ENCODE measurements at regions of chrX and their contacts with region 1.

Region 1: DNA sequence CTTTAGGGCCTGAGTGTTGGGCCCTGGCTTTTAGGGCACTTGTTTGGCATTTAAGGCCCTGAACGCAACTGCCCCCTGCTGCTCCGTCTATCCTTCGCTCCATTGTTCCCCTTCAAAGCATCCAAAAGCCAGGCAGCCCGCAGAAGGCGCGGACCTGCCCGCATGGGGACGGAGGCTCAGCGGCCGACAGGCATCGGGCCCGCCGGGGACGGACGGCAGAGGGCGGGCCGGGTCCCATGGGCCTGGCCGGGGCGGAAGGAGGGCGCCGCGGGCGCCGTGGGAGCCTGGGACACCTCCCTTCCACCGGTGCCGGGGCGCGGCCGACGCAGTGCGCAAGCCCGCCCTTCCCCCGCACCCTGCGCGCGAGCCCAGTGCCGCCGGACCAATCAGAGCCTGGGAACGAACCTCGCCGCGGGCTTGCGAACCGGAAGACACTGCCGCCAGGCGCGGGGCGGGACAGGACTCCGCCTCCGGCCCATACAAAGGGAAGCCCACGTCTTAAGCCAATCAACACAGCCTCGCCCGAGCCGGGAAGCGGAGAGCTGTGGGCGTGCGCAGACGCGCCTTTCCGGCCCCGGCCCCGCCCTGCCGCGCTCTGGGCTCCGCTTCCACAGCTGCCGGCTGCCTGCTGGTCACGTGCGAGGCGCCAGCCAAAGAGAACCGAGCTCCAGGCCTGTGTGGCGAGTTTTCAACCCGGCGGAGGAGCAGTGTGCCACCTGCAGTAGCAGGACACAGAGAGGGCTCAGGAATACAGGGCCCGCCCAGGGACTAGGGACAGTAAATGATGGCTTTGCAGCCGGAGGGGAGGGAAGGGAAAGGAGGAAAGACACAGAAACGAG is 2.1 kb upstream of the ARHGAP4 start:
- DNase-seq: peak; percentile 91 to 98
- H3K4me3 ChIP-seq: peak overlapping the region; percentile 66 to 76
- H3K27ac ChIP-seq: peak overlapping the region; percentile 92 to 97
- H3K4me1 ChIP-seq: peaks cover 6 to 9% of the 10 kb centered on the region in 2 donors
- H3K27me3 ChIP-seq: no peaks in the 10 kb centered on the region
- CTCF ChIP-seq: peak in 1 of 3 experiments; percentile 25

Region 2: GRCh38 chrX:153724252-153725040 is 203.7 kb before region 1 on chrX and contains the starts of genes ABCD1 and BCAP31:
- intact Hi-C with region 1: loop called (anchors 1 kb)
- DNase-seq: peak; percentile 51 to 92
- H3K4me3 ChIP-seq: peak within 1 kb of the TSS; percentile 62 to 69
- H3K27ac ChIP-seq: peak within 1 kb of the TSS; percentile 88 to 89
- H3K4me1 ChIP-seq: peaks cover 8 to 26% of the 10 kb centered on the region in 2 donors
- H3K27me3 ChIP-seq: no peaks in the 10 kb centered on the region
- CTCF ChIP-seq: no peak
- total RNA-seq, gene ABCD1: 14.7 TPM
- total RNA-seq, gene BCAP31: 63.0 TPM

Region 3: DNA sequence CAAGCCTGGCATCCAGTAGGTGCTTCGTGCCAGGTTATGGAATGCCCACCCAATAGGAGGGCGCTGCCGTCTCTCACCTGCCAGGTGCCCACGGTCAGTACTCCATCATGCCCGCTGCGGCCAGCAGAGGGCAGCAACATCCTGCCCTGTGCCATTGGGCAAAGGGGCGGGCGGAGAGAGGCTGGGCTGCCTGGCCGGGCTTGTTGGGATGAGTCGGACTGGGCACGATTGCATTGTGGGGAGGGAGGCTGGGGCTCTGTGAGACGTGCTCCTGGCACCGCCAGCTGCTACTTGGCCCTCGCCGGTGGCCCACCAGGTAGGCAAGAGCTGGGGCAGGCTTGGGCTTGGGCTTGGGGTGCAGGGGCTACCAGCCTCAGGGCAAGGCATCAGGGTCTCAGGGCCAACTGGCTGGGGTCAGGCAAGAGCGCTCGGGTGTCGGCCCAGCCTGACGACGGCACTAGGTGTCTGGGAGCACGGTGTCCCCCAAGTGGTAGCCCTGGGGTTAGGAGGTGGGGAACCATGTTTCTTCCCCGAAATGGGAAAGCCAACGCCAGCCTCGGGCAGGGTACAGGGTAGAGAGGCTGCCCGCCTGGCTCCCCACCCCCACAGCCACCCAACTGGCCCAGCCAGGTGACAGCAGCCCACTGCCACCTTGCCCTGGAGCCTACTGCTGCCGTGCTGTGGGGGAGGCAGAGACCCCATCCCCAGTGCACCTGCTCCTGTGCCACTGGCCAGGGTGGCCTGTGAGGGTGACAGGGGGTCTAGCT is 164.0 kb before region 1 on chrX and contains the start of gene PLXNB3:
- intact Hi-C with region 1: no loop called
- DNase-seq: peak; percentile 32 to 90
- H3K4me3 ChIP-seq: peak within 1 kb of the TSS; percentile 31 to 56
- H3K27ac ChIP-seq: peak within 1 kb of the TSS; percentile 58 to 59
- H3K4me1 ChIP-seq: peaks cover 0 to 8% of the 10 kb centered on the region in 2 donors
- H3K27me3 ChIP-seq: no peaks in the 10 kb centered on the region
- CTCF ChIP-seq: peak; percentile 81 to 87 (median 82)
- total RNA-seq, gene PLXNB3: 99.1 TPM

Region 4: GRCh38 chrX:153794018-153794896 is 133.9 kb before region 1 on chrX and contains the starts of genes IDH3G and SSR4:
- intact Hi-C with region 1: loop called (anchors 1 kb)
- DNase-seq: peak; percentile 48 to 95
- H3K4me3 ChIP-seq: peak within 1 kb of the TSS; percentile 71 to 76
- H3K27ac ChIP-seq: peak within 1 kb of the TSS; percentile 93 to 96
- H3K4me1 ChIP-seq: peaks cover 0 to 6% of the 10 kb centered on the region in 2 donors
- H3K27me3 ChIP-seq: no peaks in the 10 kb centered on the region
- CTCF ChIP-seq: peak in 1 of 3 experiments; percentile 13
- total RNA-seq, gene IDH3G: 351 TPM
- total RNA-seq, gene SSR4: 331 TPM

Region 5: GRCh38 chrX:153947009-153947769 is 19.0 kb after region 1 on chrX:
- intact Hi-C with region 1: loop called (anchors 2 kb)
- DNase-seq: peak in 1 of 2 donors; percentile 83
- H3K4me3 ChIP-seq: no peak overlapping the region
- H3K27ac ChIP-seq: peak overlapping the region in 1 of 2 donors; percentile 12
- H3K4me1 ChIP-seq: peaks cover 0 to 2% of the 10 kb centered on the region in 2 donors
- H3K27me3 ChIP-seq: no peaks in the 10 kb centered on the region
- CTCF ChIP-seq: peak; percentile 68 to 77 (median 71)

Region 6: DNA sequence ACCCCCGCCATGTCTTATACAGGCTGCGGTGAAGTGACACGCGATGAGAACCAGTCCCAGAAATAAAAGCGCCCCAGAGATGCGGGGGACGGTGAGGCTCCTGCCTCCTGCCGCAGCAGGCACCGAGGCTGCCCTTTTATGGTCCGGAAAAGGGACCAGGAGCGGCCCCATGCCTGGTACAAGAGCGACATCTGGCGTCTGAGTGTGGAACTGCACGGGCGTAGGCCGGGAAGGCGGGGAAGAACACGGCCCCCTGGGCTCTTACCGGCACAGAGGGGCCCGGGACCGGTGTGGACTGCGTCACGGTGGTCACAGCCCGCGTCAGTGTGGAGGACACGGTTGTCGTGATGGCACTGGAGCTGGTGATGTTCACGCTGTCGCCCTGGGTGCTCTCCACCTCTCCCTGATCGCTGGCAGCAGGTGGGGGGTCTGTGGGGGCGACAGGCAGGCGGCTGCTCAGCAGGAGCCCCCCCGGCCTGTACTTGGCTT is 25.2 kb after region 1 on chrX:
- intact Hi-C with region 1: loop called (anchors 1 kb)
- DNase-seq: peak in 1 of 2 donors; percentile 89
- H3K4me3 ChIP-seq: peak overlapping the region in 1 of 2 donors; percentile 27
- H3K27ac ChIP-seq: peak overlapping the region; percentile 69 to 78
- H3K4me1 ChIP-seq: peaks cover 4 to 16% of the 10 kb centered on the region in 2 donors
- H3K27me3 ChIP-seq: no peaks in the 10 kb centered on the region
- CTCF ChIP-seq: peak; percentile 97 to 100 (median 99)

Region 7: GRCh38 chrX:153971450-153972367 is 43.6 kb after region 1 on chrX and contains the start of gene HCFC1:
- intact Hi-C with region 1: loop called (anchors 1 kb)
- DNase-seq: peak; percentile 73 to 97
- H3K4me3 ChIP-seq: peak within 1 kb of the TSS; percentile 84 to 91
- H3K27ac ChIP-seq: peak within 1 kb of the TSS; percentile 98 to 99
- H3K4me1 ChIP-seq: peaks cover 12 to 17% of the 10 kb centered on the region in 2 donors
- H3K27me3 ChIP-seq: no peaks in the 10 kb centered on the region
- CTCF ChIP-seq: no peak
- total RNA-seq, gene HCFC1: 91.4 TPM